ENCODE measurements at regions of chrX and their contacts with region 1.

Region 1: DNA sequence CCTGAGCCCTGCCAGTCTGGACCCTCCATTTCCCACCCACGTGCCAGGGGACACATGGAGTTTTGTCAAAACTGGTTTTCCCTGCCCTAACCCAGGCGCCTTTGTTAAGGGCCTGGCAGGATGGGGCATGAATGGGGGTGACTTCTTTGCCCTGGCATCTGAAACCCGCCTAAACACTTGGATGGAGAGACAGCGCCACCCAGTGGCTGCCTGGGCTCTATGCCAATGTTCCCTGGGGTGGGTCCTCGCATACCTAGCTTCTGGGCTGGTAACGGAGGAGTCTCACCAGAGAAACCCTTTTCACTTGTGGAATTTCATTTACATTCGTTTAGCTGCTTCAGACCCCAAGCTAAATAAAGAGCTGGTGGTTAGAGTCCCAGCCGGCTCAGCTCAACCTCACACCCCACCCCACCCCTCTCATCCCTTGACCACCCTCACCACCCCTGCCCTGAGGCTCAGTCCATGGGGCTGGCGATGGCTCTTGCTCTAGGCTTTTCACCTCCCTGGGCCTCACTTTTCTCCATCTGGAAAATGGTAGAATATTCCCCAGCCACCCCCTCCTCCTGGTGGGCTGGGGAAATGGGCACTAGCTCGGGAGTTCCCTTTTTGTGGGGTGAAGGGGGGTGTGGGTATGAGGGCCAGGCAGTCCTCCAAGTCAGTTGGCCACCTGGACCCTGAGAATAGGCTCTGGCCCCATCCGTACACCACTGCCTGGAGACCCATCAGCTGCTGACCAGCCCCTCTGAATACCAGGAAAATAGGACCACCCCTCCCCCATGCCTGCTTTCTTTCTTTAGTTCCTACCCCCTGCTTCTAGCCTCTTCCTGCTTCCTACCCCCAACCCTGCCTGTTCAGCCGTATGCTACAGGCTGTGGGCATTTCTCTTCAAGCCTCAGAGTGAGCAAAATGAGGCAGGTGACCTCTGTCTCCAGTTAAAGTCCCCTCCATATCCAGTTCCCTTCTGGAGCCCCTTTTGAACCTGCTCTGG is 57.1 kb upstream of the PJA1 start:
- DNase-seq: peak; percentile 80
- H3K4me3 Mint-ChIP-seq: no peak overlapping the region
- H3K27ac Mint-ChIP-seq: no peak overlapping the region
- H3K4me1 Mint-ChIP-seq: no peaks in the 10 kb centered on the region
- H3K27me3 Mint-ChIP-seq: no peaks in the 10 kb centered on the region

Region 2: GRCh38 chrX:68183612-68184214 is 1038.7 kb before region 1 on chrX:
- CTCF ChIA-PET with region 1: no interaction called
- intact Hi-C with region 1: loop called (anchors 10 kb)
- DNase-seq: no peak
- H3K4me3 Mint-ChIP-seq: no peak overlapping the region
- H3K27ac Mint-ChIP-seq: no peak overlapping the region
- H3K4me1 Mint-ChIP-seq: peaks cover 11% of the 10 kb centered on the region
- H3K27me3 Mint-ChIP-seq: no peaks in the 10 kb centered on the region

Region 3: DNA sequence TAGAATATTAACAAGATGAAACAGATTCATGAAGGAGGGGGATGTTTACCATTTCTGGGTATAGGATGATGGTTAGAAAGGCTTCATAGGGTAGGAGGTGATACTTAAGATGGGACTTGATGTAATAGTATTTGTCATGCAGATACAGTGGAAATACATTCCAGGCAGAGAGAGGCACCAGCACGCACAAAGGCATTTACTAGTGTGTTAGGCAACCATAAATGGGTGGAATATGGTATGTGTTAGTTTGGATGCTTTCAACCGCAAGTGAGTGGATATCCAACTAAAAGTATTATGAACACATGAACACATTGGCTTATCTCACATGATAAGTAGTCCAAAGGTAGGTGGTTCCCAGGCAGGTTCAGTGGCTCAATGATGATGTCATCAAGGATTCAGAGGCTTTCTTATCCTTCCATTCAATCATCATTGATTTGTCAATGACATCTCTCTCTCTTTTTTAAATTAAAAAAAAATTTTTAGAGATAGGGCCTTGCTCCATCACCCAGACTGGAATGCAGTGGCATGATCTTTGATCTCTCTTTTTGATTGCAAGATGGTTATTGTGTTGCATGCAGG is 587.7 kb before region 1 on chrX:
- CTCF ChIA-PET with region 1: no interaction called
- intact Hi-C with region 1: no loop called
- DNase-seq: no peak
- H3K4me3 Mint-ChIP-seq: no peak overlapping the region
- H3K27ac Mint-ChIP-seq: no peak overlapping the region
- H3K4me1 Mint-ChIP-seq: no peaks in the 10 kb centered on the region
- H3K27me3 Mint-ChIP-seq: no peaks in the 10 kb centered on the region

Region 4: DNA sequence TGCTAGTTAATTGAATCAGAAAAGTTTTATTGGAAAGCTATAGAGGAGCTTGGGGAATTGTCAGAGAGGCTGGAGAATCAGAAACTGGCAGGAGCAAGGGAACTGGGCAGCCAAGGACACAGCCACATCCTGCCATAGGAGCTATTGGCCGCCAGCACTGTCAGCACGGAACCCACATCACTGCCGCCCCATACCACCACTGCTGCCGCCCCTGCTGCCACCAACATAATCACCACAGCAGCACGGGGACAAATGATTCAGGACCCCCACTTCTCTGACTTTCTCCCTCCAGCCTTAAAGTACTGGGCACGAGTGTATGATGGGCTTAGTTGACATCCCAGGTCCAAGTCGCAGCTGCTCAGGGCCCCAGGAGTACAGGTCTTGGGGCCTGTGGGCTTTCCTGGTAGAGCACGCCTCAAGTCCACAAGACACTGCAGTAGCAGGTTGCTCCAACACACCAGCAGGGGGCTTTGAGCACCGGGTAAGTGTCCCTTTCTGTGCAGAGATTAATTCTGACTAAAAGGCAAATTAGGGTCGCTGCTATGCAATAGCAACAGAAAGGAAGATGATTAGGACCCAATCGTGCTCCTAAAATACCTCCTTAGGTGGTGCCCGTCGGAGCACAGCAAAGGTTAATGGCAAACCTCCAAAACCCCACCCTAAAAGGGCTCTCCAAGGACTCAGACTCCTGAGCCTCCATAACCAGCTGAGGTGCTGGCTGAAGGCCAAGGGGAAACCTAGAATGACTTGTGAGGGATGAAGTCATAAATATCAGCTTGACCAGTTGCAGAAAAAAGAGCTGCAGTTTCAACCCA is 64.0 kb before region 1 on chrX:
- CTCF ChIA-PET with region 1: interaction called, 3 read pairs
- intact Hi-C with region 1: loop called (anchors 5 kb)
- DNase-seq: peak; percentile 16
- H3K4me3 Mint-ChIP-seq: no peak overlapping the region
- H3K27ac Mint-ChIP-seq: no peak overlapping the region
- H3K4me1 Mint-ChIP-seq: peaks cover 22% of the 10 kb centered on the region
- H3K27me3 Mint-ChIP-seq: no peaks in the 10 kb centered on the region

Region 5: DNA sequence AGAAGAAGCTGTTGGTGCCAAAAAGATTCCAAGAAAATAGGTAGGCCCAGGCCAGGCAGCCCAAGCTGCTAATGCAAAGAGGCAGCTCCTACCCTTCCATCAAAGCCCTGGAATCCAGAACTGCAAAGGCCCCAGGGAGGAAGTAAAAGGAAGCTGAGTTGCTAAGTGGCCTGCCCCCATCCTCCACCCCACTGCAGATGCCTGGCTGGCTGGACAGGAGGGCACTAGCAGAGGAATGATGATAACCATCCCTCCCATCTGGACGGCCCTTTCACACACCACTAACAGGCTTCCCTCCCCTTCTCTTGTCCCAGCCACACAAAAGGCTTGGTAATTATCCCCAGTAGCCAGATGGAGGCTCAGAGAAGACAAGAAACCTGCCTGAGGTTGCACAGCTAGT is 24.7 kb before region 1 on chrX:
- CTCF ChIA-PET with region 1: no interaction called
- intact Hi-C with region 1: no loop called
- DNase-seq: no peak
- H3K4me3 Mint-ChIP-seq: no peak overlapping the region
- H3K27ac Mint-ChIP-seq: no peak overlapping the region
- H3K4me1 Mint-ChIP-seq: no peaks in the 10 kb centered on the region
- H3K27me3 Mint-ChIP-seq: no peaks in the 10 kb centered on the region

Region 6: GRCh38 chrX:69257499-69258127 is 35.2 kb after region 1 on chrX:
- CTCF ChIA-PET with region 1: no interaction called
- intact Hi-C with region 1: no loop called
- DNase-seq: no peak
- H3K4me3 Mint-ChIP-seq: no peak overlapping the region
- H3K27ac Mint-ChIP-seq: no peak overlapping the region
- H3K4me1 Mint-ChIP-seq: no peaks in the 10 kb centered on the region
- H3K27me3 Mint-ChIP-seq: no peaks in the 10 kb centered on the region

Region 7: GRCh38 chrX:69305333-69306062 is 83.1 kb after region 1 on chrX:
- CTCF ChIA-PET with region 1: no interaction called
- intact Hi-C with region 1: no loop called
- DNase-seq: peak; percentile 5
- H3K4me3 Mint-ChIP-seq: no peak overlapping the region
- H3K27ac Mint-ChIP-seq: no peak overlapping the region
- H3K4me1 Mint-ChIP-seq: no peaks in the 10 kb centered on the region
- H3K27me3 Mint-ChIP-seq: peaks cover 17% of the 10 kb centered on the region